Activated naive CD4-positive, alpha-beta T cell treated with anti-CD3 and anti-CD28 coated beads for 36 hours (primary cell): ENCODE measurements at regions of chr4 and their contacts with region 1.

Region 1: DNA sequence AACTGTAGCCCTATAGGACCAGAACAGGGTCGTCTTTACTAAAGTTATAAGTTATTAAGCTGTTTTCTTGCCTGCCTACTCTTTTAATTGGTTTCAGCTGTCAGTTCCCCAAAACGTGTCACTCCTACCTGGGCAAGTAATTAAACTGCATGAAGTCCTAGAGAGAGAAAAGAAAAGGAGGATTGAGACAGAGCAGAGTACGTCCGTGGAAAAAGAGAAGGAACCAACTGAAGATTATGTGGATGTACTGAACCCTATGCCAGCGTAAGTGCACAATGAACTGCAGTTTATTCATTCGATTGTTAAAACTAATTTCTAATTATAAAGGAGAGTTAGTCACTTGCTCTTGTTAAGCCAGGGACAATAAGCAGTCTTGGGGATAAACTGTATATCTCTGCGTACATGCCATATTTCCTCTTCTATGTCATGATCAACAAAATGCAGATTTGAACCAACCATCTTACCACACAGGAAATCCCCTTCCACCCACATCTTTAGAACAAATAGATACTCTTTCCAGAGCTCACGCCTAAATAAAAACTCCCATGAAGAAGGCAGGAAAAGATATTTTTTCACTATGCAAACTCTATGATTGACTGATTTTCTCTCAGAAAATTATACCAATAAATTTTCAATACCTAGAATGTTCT is 22.8 kb downstream of the STAP1 start:
- DNase-seq: peak; percentile 26
- H3K4me3 Mint-ChIP-seq: peak overlapping the region; percentile 57
- H3K27ac Mint-ChIP-seq: peak overlapping the region; percentile 89
- H3K4me1 Mint-ChIP-seq: peaks cover 43% of the 10 kb centered on the region
- H3K27me3 Mint-ChIP-seq: no peaks in the 10 kb centered on the region

Region 2: GRCh38 chr4:67288964-67289363 is 292.4 kb before region 1 on chr4:
- CTCF ChIA-PET with region 1: no interaction called
- intact Hi-C with region 1: no loop called
- DNase-seq: peak; percentile 56
- H3K4me3 Mint-ChIP-seq: no peak overlapping the region
- H3K27ac Mint-ChIP-seq: no peak overlapping the region
- H3K4me1 Mint-ChIP-seq: no peaks in the 10 kb centered on the region
- H3K27me3 Mint-ChIP-seq: peaks cover 5% of the 10 kb centered on the region

Region 3: DNA sequence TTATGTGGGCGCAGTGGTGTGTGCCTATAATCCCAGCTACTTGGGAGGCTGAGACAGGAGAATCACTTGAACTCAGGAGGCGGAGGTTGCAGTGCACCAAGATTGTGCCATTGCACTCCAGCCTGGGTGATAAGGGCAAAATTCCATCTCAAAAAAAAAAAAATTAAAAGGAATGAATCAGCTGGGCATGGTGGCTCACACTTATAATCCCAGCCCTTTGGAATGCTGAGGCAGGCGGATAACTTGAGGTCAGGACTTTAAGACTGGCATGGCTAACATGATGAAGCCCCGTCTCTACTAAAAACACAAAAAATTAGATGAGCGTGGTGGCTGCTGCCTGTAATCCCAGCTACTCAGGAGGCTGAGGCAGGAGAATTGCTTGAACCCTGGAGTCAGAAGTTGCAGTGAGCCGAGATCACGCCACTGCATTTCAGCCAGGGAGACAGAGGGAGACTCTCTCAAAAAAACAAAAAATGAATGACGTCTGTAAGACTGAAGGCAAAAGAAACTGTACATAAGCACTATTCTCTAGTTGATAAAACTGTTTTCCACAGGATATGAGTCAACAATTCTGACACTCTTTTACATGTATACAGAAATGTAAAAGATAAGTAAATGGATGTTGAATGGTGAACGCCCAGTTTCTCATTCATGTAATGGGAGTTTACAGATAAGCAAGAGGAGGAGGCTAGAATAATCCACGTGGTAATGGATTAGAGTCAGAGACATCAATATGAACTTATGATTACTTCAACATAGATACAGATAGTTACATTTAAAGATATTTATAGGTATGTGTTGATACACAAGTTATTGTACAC is 58.3 kb before region 1 on chr4:
- CTCF ChIA-PET with region 1: no interaction called
- intact Hi-C with region 1: loop called (anchors 2 kb)
- DNase-seq: no peak
- H3K4me3 Mint-ChIP-seq: peak overlapping the region; percentile 10
- H3K27ac Mint-ChIP-seq: peak overlapping the region; percentile 86
- H3K4me1 Mint-ChIP-seq: peaks cover 70% of the 10 kb centered on the region
- H3K27me3 Mint-ChIP-seq: no peaks in the 10 kb centered on the region

Region 4: DNA sequence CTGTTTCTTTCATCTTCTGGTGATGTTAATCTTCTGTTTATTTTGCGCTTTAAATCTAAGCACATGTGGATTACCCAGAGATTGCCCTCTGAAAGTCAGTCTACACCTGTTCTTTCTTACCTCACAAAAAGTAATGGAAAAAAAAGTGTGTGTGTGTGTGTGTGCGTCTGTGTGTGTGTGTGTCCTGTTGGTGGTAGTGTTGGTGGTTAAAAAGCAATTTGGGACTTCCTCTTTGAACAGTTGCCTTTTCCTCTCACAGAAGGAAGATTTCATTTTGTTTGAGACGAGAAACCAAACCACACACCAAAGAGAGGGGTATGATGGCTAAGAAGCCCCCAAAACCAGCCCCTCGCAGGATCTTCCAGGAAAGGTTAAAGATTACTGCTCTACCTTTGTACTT is 22.8 kb before region 1 on chr4 and contains the start of gene STAP1:
- CTCF ChIA-PET with region 1: interaction called, 3 read pairs
- intact Hi-C with region 1: loop called (anchors 1 kb)
- DNase-seq: peak; percentile 65
- H3K4me3 Mint-ChIP-seq: peak within 1 kb of the TSS; percentile 86
- H3K27ac Mint-ChIP-seq: peak within 1 kb of the TSS; percentile 93
- H3K4me1 Mint-ChIP-seq: peaks cover 49% of the 10 kb centered on the region
- H3K27me3 Mint-ChIP-seq: no peaks in the 10 kb centered on the region
- total RNA-seq, gene STAP1: 18.9 to 22.1 TPM

Region 5: DNA sequence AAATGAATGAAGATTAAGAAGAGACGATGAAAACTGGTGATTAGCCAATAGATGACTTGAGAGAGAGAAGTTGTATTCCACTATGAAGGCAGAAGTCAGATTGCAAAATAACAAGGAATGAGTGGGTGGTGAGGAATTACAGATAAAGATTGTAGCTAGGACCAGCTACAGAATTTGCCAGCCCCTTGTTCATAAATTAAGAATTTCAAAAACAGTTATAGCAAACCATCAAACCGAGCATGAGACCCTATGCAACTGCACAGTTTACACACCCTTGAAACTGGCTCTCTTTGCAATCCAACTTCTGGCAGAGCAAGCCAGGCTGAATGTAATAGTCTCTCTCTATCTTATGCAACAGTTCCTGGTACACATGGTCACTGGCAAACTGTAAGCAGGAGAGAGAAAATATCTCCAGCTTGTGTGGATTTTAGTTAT is 12.4 kb after region 1 on chr4:
- CTCF ChIA-PET with region 1: no interaction called
- intact Hi-C with region 1: no loop called
- DNase-seq: no peak
- H3K4me3 Mint-ChIP-seq: no peak overlapping the region
- H3K27ac Mint-ChIP-seq: no peak overlapping the region
- H3K4me1 Mint-ChIP-seq: peaks cover 3% of the 10 kb centered on the region
- H3K27me3 Mint-ChIP-seq: no peaks in the 10 kb centered on the region

Region 6: GRCh38 chr4:67604749-67605148 is 23.4 kb after region 1 on chr4:
- CTCF ChIA-PET with region 1: no interaction called
- intact Hi-C with region 1: no loop called
- DNase-seq: no peak
- H3K4me3 Mint-ChIP-seq: no peak overlapping the region
- H3K27ac Mint-ChIP-seq: no peak overlapping the region
- H3K4me1 Mint-ChIP-seq: peaks cover 2% of the 10 kb centered on the region
- H3K27me3 Mint-ChIP-seq: no peaks in the 10 kb centered on the region

Region 7: DNA sequence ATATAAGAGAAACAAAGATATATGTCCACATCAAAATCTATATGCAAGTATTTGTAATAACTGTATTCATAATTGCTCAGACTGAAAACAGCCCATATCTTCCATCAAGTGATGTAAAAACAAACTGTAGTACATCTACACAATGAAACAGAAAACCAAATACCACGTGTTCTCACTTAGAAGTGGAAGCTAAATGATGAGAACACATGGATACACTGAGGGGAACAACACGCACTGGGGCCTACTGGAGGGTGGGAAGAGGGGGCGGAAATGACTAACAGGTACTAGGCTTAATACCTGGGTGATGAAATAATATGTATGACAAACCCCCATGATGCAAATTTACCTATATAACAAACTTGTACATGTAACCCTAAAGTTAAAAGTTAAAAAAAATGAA is 77.0 kb after region 1 on chr4:
- CTCF ChIA-PET with region 1: no interaction called
- intact Hi-C with region 1: loop called (anchors 2 kb)
- DNase-seq: peak; percentile 58
- H3K4me3 Mint-ChIP-seq: no peak overlapping the region
- H3K27ac Mint-ChIP-seq: no peak overlapping the region
- H3K4me1 Mint-ChIP-seq: peaks cover 25% of the 10 kb centered on the region
- H3K27me3 Mint-ChIP-seq: no peaks in the 10 kb centered on the region

Region 8: DNA sequence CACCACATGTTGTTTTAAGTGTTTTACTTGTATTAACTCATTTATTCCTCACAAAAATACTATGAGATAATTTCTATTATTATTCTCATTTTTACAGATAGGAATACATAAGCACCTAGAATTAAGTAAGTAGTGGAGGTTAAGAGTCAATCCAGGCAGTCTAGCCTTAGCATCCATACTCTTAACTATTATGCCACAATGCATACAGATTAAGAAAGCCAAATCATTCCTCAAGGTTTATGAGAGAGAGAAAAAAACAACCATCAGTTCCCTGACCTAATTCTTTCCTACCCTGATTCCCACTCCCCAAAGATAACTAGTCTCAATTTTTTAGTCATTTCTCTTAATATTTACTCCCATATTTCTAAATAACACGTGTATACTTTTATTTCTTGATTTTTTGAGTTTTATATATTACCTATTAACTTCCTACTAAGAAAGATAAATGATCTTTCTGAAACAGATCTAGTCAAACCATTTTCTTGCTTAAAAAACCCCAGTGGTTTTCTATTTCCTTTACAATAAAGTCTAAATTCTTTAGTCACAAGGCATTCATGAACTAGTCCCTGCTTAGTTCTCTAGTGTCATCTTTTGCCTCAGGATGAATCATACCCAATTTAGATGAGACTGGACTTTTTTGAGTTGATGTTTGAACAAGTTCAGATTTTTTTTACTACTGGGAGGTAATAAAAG is 103.7 kb after region 1 on chr4:
- CTCF ChIA-PET with region 1: no interaction called
- intact Hi-C with region 1: loop called (anchors 1 kb)
- DNase-seq: no peak
- H3K4me3 Mint-ChIP-seq: no peak overlapping the region
- H3K27ac Mint-ChIP-seq: peak overlapping the region; percentile 11
- H3K4me1 Mint-ChIP-seq: peaks cover 32% of the 10 kb centered on the region
- H3K27me3 Mint-ChIP-seq: no peaks in the 10 kb centered on the region

Region 9: DNA sequence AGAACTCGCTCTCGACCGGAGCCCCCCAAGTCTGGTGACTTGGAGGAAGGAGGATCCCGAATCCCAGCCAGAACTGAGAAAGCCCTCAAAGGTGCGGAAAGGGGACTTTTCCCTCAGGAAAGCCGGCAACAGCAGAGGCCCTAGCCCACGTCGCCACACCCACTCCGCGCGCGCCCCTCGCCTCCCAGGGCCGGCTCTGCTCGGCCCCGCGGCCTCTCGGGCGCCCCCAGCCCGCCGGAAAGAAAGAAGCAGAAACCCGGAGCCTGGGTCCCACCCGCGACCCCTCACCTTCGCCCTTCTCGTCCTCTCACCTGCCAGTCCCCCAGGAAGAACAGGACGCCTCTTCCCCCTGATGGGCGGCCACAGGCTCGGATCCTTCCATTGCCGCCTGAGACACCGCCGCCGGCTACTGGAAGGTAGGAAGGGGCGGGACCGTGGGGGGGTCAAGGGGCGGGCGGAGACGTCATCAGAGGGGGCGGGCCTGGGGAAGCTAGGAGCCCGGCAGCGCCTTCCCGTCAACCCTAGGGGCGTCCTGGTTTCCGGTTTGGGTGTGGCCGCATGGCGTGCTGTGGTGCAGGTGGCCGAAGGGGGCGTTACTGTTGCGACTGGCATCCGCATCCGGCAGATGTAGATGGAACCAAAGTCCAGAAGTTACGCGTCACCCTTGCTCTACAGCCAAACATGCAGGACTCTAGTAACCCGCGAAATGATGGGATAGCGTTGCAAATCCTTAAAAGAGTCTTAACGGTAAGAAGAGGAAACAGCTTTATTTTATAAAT is 119.6 kb after region 1 on chr4 and contains the start of gene UBA6:
- CTCF ChIA-PET with region 1: no interaction called
- intact Hi-C with region 1: loop called (anchors 1 kb)
- DNase-seq: peak; percentile 97
- H3K4me3 Mint-ChIP-seq: peak within 1 kb of the TSS; percentile 91
- H3K27ac Mint-ChIP-seq: peak within 1 kb of the TSS; percentile 96
- H3K4me1 Mint-ChIP-seq: peaks cover 48% of the 10 kb centered on the region
- H3K27me3 Mint-ChIP-seq: no peaks in the 10 kb centered on the region
- total RNA-seq, gene UBA6: 71.6 to 79.5 TPM

Region 10: GRCh38 chr4:68249434-68249833 is 668.1 kb after region 1 on chr4:
- CTCF ChIA-PET with region 1: no interaction called
- intact Hi-C with region 1: loop called (anchors 1 kb)
- DNase-seq: peak; percentile 25
- H3K4me3 Mint-ChIP-seq: no peak overlapping the region
- H3K27ac Mint-ChIP-seq: peak overlapping the region; percentile 88
- H3K4me1 Mint-ChIP-seq: peaks cover 16% of the 10 kb centered on the region
- H3K27me3 Mint-ChIP-seq: peaks cover 7% of the 10 kb centered on the region